ENCODE measurements at regions of chr10 and their contacts with region 1.

Region 1: GRCh38 chr10:93080350-93081046 is 6.8 kb downstream of the CYP26A1 start:
- DNase-seq: no peak
- ATAC-seq: peak; percentile 87
- H3K4me3 ChIP-seq: no peak overlapping the region
- H3K27ac ChIP-seq: no peak overlapping the region
- H3K4me1 ChIP-seq: peaks cover 5% of the 10 kb centered on the region
- H3K27me3 ChIP-seq: peaks cover 4 to 5% of the 10 kb centered on the region in 2 experiments; a peak in 2 of 4 replicates
- CTCF ChIP-seq: peak; percentile 76 to 85 (median 83)
- EP300 ChIP-seq: no peak
- POLR2A ChIP-seq: no peak
- RAD21 ChIP-seq: peak; percentile 90

Region 2: DNA sequence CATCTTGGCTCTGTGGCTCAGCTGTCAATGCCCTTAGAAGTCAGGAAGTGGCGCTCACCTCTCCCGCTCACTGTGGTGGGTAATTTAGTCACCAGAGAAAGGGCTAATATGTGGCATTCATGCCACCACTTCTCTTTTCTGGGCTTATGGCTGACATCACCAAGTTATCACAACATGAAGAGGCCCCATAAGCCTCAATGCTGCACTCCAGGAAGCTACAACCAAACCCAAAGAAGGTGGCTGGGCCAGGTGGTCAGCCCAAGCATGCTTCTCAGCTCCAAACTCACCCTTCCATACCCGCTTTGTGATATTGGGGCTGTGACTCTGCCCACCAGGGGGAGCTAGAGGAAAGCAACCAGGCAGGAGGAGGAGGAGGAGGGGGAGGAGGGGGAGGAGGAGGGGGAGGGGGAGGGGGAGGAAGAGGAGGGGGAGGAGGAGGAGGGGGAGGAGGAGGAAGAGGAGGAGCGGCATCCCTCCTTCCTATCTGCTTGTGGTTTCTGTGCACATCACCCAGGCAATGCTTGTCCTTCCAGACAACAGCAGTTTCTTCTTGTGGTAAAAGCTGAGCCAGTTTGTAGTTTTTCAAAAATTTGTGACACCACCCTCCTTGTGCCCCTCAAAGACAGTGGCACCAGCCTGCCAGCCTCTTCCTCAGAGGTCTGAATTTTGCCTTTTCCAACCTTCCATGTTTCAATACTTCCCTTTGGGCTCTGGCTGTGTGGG is 35.3 kb after region 1 on chr10:
- CTCF ChIA-PET with region 1: interaction called, 7 read pairs
- POLR2A ChIA-PET with region 1: no interaction called
- RAD21 ChIA-PET with region 1: no interaction called
- SMC1A ChIA-PET with region 1: interaction called, 11 read pairs
- in situ Hi-C with region 1: no loop called
- intact Hi-C with region 1: loop called (anchors 1 kb)
- DNase-seq: peak; percentile 32
- ATAC-seq: peak; percentile 96
- H3K4me3 ChIP-seq: no peak overlapping the region
- H3K27ac ChIP-seq: no peak overlapping the region
- H3K4me1 ChIP-seq: peaks cover 8% of the 10 kb centered on the region; the same call in 1 of the 2 replicates
- H3K27me3 ChIP-seq: no peaks in the 10 kb centered on the region
- CTCF ChIP-seq: peak; percentile 61 to 72 (median 62)
- EP300 ChIP-seq: no peak
- POLR2A ChIP-seq: no peak
- RAD21 ChIP-seq: peak; percentile 83

Region 3: GRCh38 chr10:93224005-93224779 is 143.7 kb after region 1 on chr10:
- CTCF ChIA-PET with region 1: interaction called, 3 read pairs
- POLR2A ChIA-PET with region 1: no interaction called
- RAD21 ChIA-PET with region 1: no interaction called
- SMC1A ChIA-PET with region 1: no interaction called
- in situ Hi-C with region 1: no loop called
- intact Hi-C with region 1: loop called (anchors 1 kb)
- DNase-seq: peak; percentile 3
- ATAC-seq: no peak
- H3K4me3 ChIP-seq: no peak overlapping the region
- H3K27ac ChIP-seq: no peak overlapping the region
- H3K4me1 ChIP-seq: no peaks in the 10 kb centered on the region
- H3K27me3 ChIP-seq: peaks cover 0 to 3% of the 10 kb centered on the region in 2 experiments; a peak in 2 of 4 replicates
- CTCF ChIP-seq: peak in 2 of 3 experiments; percentile 3 to 23; a peak in 1 of 6 replicates
- EP300 ChIP-seq: no peak
- POLR2A ChIP-seq: no peak
- RAD21 ChIP-seq: no peak

Region 4: DNA sequence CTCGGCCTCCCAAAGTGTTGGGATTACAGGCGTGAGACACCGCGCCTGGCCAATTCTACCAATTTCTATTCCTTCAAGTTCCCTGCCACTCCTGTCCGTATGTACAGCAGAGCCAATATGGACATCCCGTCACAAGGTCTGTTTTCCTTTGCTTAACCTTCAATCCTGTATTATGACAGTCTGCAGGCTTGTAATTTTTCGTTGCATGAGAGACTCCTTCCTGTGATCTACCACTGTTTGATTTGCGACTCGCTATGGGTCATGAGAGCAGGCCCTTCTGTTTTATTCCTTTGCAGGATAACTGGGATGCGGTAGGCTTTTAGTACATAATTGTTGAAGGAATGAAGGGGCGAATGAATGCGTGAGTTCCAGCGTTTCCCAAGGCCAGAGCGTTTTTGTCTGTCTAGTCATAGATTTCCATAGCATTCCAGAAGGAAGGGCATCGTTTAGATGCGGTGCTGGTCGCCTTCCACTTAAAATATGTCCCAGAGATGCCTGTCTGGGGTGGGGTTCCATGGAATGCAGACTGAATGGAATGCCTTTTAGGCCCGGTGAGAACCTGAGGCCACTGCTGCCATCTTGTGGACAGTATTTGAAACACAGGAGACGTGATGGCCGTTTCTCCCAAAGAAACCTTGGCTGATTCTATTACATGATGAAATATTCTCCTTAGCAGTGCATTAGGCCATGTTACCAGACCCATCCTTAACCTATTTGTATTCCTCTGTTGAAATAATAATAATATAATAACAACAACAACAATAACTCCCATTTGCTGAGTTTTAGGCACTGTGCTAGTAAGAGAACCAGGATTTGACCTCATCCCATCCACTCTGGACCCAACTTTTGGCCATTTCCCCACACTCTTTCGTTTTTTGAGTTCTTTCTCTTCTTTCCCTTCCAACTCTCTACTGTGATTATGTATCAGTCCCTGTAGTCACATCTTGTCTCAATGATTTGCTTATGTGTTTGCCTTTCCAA is 208.4 kb after region 1 on chr10:
- CTCF ChIA-PET with region 1: interaction called, 18 read pairs
- POLR2A ChIA-PET with region 1: no interaction called
- RAD21 ChIA-PET with region 1: interaction called, 4 read pairs
- SMC1A ChIA-PET with region 1: interaction called, 5 read pairs
- in situ Hi-C with region 1: loop called (anchors 5 kb)
- intact Hi-C with region 1: loop called (anchors 1 kb)
- DNase-seq: no peak
- ATAC-seq: peak; percentile 70
- H3K4me3 ChIP-seq: no peak overlapping the region
- H3K27ac ChIP-seq: no peak overlapping the region
- H3K4me1 ChIP-seq: no peaks in the 10 kb centered on the region
- H3K27me3 ChIP-seq: 0 out of 4 replicates have a peak, but pooled peaks cover 0 to 2% of the 10 kb centered on the region in 2 experiments
- CTCF ChIP-seq: peak; percentile 61 to 72 (median 70)
- EP300 ChIP-seq: no peak
- POLR2A ChIP-seq: no peak
- RAD21 ChIP-seq: peak; percentile 88

Region 5: GRCh38 chr10:93293999-93294398 is 213.5 kb after region 1 on chr10:
- CTCF ChIA-PET with region 1: interaction called, 18 read pairs
- POLR2A ChIA-PET with region 1: no interaction called
- RAD21 ChIA-PET with region 1: interaction called, 4 read pairs
- SMC1A ChIA-PET with region 1: interaction called, 5 read pairs
- in situ Hi-C with region 1: loop called (anchors 5 kb)
- intact Hi-C with region 1: loop called (anchors 1 kb)
- DNase-seq: no peak
- ATAC-seq: no peak
- H3K4me3 ChIP-seq: no peak overlapping the region
- H3K27ac ChIP-seq: no peak overlapping the region
- H3K4me1 ChIP-seq: no peaks in the 10 kb centered on the region
- H3K27me3 ChIP-seq: no peaks in the 10 kb centered on the region; a peak in 1 of 4 replicates
- CTCF ChIP-seq: no peak
- EP300 ChIP-seq: no peak
- POLR2A ChIP-seq: no peak
- RAD21 ChIP-seq: no peak